ENCODE measurements at regions of chr21 and their contacts with region 1.

Region 1: DNA sequence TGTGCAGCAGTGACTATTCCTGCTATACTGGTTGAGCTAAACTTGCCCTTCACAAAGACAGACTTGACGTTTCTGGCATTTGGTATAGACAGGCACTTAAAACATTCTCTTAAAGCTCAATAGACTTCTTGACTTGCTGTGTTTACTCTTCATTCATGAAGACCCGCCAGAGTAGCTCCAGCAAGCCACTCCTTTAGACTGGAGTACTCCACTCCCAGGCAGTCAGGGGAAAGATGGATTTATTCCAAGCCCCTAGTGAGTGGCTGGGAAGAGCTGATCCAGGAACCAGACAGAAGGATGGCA is 70.7 kb downstream of the EVA1C start:
- H3K4me3 ChIP-seq: no peak overlapping the region
- H3K27ac ChIP-seq: no peak overlapping the region
- H3K4me1 ChIP-seq: no peaks in the 10 kb centered on the region
- CTCF ChIP-seq: no peak

Region 2: DNA sequence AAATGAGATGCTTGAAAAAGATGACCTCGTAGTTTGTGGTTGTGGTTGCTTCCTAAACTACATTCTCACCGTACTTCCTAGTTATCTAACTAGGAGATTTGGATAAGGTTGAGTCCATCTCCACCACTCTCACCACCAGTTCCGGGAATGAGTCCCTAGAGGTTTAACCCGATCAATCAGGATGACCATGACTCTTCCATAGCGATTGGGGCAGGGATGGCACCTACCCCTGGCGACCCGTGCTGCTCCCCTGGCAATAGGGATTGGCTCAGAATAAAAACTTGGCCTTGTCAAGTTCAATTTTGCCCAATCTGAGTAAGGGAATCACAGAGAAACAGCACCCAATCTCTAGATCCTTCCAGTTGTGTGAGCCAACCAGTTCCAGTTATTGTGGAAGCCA is 201.7 kb before region 1 on chr21:
- CTCF ChIA-PET with region 1: no interaction called
- POLR2A ChIA-PET with region 1: interaction called, 10 read pairs
- H3K4me3 ChIP-seq: no peak overlapping the region
- H3K27ac ChIP-seq: no peak overlapping the region
- H3K4me1 ChIP-seq: peaks cover 6% of the 10 kb centered on the region; the same call in 1 of the 2 replicates
- CTCF ChIP-seq: no peak

Measured in HEK293 (cell line).